Panc1 (cell line): ENCODE measurements at regions of chr11 and their contacts with region 1.

Region 1: GRCh38 chr11:3220521-3221407 is 2.2 kb upstream of the MRGPRG start:
- DNase-seq: no peak
- ATAC-seq: no peak
- H3K4me3 ChIP-seq: no peak overlapping the region
- H3K27ac ChIP-seq: no peak overlapping the region
- H3K4me1 ChIP-seq: peaks cover 7% of the 10 kb centered on the region
- H3K27me3 ChIP-seq: peaks cover 14% of the 10 kb centered on the region
- CTCF ChIP-seq: no peak

Region 2: GRCh38 chr11:3135481-3136440 is 85.0 kb before region 1 on chr11:
- CTCF ChIA-PET with region 1: no interaction called
- POLR2A ChIA-PET with region 1: interaction called, 11 read pairs
- in situ Hi-C with region 1: no loop called
- intact Hi-C with region 1: no loop called
- DNase-seq: no peak
- ATAC-seq: peak; percentile 72
- H3K4me3 ChIP-seq: no peak overlapping the region
- H3K27ac ChIP-seq: no peak overlapping the region
- H3K4me1 ChIP-seq: no peaks in the 10 kb centered on the region; the same call in 1 of the 2 replicates
- H3K27me3 ChIP-seq: no peaks in the 10 kb centered on the region
- CTCF ChIP-seq: no peak

Region 3: DNA sequence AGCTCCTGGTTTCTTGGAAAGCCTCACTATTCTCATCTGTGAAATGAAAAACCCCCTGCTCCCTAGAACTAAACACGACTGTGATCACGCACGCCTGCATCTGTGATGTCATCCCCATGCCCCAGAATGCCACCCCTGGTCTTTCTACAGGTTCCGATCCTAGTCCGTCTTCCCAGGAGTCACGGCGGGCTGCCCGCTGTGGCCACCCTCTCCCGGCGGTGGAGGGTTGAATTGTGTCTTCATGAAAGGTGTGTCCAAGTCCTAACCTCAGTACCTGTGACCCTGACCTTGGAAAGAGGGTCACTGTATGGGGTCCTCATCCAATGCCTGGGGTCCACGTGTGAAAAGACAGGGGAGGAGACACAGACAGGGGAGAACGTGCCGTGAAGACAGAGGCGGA is 70.0 kb before region 1 on chr11:
- CTCF ChIA-PET with region 1: interaction called, 12 read pairs
- POLR2A ChIA-PET with region 1: no interaction called
- in situ Hi-C with region 1: no loop called
- intact Hi-C with region 1: no loop called
- DNase-seq: no peak
- ATAC-seq: no peak
- H3K4me3 ChIP-seq: no peak overlapping the region
- H3K27ac ChIP-seq: no peak overlapping the region
- H3K4me1 ChIP-seq: peaks cover 27% of the 10 kb centered on the region
- H3K27me3 ChIP-seq: no peaks in the 10 kb centered on the region
- CTCF ChIP-seq: no peak

Region 4: DNA sequence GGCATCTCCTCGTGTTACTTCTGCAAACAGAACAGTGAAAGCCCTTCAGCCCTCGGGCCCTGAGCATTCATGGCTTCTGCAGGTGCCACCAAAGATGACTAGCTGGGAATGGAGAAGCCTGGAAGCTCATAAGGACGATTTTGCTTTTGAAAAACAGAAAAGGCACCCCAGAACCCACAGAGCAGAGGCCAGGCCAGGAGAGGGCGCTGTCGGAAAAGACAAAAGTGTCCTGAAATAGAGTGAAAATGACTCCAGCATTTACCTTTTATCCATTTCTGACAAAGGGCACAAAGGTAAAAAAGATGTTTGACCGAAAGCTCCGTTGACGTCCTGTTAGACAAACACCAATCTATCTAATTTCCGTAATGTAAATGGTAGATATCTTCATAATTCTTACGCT is 120.5 kb after region 1 on chr11:
- CTCF ChIA-PET with region 1: no interaction called
- POLR2A ChIA-PET with region 1: no interaction called
- in situ Hi-C with region 1: no loop called
- intact Hi-C with region 1: no loop called
- DNase-seq: peak; percentile 28
- ATAC-seq: peak; percentile 66
- H3K4me3 ChIP-seq: no peak overlapping the region
- H3K27ac ChIP-seq: no peak overlapping the region
- H3K4me1 ChIP-seq: peaks cover 6% of the 10 kb centered on the region; the same call in 1 of the 2 replicates
- H3K27me3 ChIP-seq: peaks cover 34% of the 10 kb centered on the region
- CTCF ChIP-seq: peak; percentile 94